ENCODE measurements at regions of chr1 and their contacts with region 1.

Region 1: GRCh38 chr1:183937611-183938010 is 99.9 kb downstream of the COLGALT2 start:
- DNase-seq: no peak
- ATAC-seq: no peak
- H3K4me3 ChIP-seq: no peak overlapping the region
- H3K27ac ChIP-seq: no peak overlapping the region
- H3K4me1 ChIP-seq: no peaks in the 10 kb centered on the region
- H3K27me3 ChIP-seq: no peaks in the 10 kb centered on the region
- CTCF ChIP-seq: no peak
- EP300 ChIP-seq: no peak
- POLR2A ChIP-seq: no peak
- RAD21 ChIP-seq: no peak

Region 2: DNA sequence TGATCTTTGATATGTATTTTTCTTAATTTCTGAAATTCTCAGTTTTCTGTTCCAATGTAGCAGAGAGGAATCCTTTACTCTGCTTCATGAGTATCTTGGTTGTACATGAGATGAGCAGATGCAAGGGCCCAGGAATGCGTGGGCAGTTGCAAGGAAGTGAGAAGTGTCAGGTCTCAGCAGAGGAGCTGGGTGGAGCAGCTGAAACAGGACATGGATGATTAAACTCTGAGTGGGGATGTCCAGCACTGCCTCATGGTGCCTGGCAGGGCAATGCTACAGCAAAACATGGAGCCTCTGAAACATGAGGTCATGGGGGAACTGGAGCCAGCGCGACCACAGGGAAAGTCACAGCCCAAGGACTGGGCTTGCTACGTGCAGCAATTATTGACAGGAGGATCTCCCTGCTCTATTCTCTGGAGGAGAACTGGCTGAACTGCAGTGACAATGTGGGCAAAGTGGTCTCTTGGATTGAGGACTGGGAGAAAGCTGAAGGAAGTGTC is 51.5 kb after region 1 on chr1:
- CTCF ChIA-PET with region 1: no interaction called
- POLR2A ChIA-PET with region 1: no interaction called
- RAD21 ChIA-PET with region 1: no interaction called
- SMC1A ChIA-PET with region 1: no interaction called
- in situ Hi-C with region 1: no loop called
- intact Hi-C with region 1: loop called (anchors 2 kb)
- DNase-seq: peak; percentile 83
- ATAC-seq: peak; percentile 98
- H3K4me3 ChIP-seq: no peak overlapping the region
- H3K27ac ChIP-seq: no peak overlapping the region
- H3K4me1 ChIP-seq: peaks cover 13% of the 10 kb centered on the region
- H3K27me3 ChIP-seq: peaks cover 0 to 11% of the 10 kb centered on the region in 2 experiments; a peak in 1 of 4 replicates
- CTCF ChIP-seq: no peak
- EP300 ChIP-seq: peak in 1 of 2 experiments; percentile 32; a peak in 1 of 4 replicates
- POLR2A ChIP-seq: no peak
- RAD21 ChIP-seq: no peak